ENCODE measurements at regions of chr14 and their contacts with region 1.

Region 1: DNA sequence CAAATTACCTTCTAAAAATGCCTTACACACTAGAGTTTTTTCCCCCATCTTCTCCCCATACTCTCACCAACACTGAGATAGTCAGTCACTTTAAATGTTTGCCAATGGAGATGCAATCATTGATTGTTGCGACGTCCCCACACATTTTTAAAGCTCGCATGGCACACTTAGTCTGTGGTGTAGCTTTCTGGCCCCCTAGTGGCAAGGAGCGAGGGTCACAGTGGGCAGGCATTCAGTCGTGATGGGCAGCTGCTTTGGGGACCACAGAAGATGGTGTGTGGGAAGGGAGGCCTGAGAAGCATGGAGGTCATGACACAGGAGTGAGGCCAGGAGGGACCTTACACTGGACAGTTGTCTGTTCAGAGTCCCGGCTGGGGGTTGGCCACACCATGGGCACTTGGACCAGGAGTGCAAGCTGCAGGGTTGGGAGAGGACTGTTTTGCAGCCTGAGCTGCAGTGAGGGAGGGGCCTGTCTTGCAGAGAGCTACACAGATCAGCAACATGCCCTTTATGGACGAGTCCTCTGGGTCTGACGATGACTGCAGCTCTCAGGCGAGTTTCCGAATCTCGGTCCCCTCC is 28.7 kb downstream of the PIGH start:
- DNase-seq: peak; percentile 67
- ATAC-seq: peak; percentile 92
- H3K4me3 ChIP-seq: no peak overlapping the region
- H3K27ac ChIP-seq: no peak overlapping the region
- H3K4me1 ChIP-seq: peaks cover 9% of the 10 kb centered on the region
- H3K27me3 ChIP-seq: no peaks in the 10 kb centered on the region
- CTCF ChIP-seq: peak; percentile 98

Region 2: DNA sequence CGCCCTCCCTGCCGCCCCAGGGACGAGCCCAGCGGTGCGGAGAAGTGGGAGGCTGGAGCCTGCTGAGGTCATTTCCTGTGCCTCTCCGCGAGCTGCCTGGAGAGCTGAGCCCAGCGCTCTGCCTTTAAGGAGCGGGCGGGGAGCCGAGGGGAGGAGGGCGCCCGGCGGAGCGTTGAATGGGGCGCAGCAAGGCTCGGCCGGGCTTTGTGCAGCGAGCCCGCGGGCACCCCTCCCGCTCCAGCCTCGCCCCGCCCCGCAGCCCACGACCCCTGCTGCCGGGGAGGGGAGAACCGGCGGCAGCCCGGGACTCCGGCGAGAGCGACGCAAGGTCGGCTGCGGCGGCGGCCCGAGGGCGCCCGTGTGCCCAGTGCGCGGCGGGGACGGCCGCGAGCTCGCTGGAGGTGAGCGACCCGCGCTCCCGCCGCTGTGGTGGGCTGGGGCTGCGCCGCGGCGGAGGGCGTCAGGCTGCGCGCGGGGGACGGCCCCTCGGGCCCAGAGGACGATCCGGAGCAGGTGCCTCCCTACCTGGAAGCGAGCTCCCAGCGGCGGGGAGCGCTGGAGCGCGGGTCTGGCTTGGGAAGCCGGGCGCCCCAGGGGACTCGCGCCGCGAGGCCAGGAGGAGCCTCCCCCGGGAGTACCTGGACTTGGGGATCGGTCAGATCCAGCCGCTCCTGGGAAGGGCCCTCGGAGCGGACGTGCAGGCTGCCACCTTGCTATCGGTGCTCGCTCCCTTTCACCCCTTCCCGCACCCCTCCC is 38.2 kb before region 1 on chr14 and contains the start of gene PLEKHH1:
- CTCF ChIA-PET with region 1: interaction called, 126 read pairs
- POLR2A ChIA-PET with region 1: no interaction called
- intact Hi-C with region 1: no loop called
- DNase-seq: peak; percentile 80
- ATAC-seq: peak; percentile 92
- H3K4me3 ChIP-seq: peak within 1 kb of the TSS; percentile 79
- H3K27ac ChIP-seq: no peak within 1 kb of the TSS
- H3K4me1 ChIP-seq: peaks cover 6% of the 10 kb centered on the region; the same call in 1 of the 2 replicates
- H3K27me3 ChIP-seq: no peaks in the 10 kb centered on the region
- CTCF ChIP-seq: no peak
- total RNA-seq, gene PLEKHH1: 6.2 and 11.1 TPM in 2 replicates

Region 3: DNA sequence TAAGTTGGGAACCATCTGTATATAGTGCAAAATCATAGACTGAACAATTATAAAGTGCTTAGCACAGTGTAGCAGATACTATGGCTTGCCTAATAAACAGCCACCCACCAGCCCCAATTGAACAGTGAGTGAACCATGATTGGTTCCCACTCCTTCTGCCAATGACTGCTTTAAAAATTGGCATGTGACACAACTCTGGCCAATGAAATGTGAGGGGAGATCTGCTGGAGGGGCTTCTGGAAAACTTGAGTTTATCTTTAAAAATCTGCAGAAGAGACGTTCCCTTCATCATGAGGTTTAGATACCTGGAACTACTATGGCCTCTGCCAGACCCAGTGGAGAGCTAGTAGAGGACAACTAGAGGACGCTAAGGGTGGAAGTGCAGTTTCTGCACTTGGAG is 24.0 kb after region 1 on chr14:
- CTCF ChIA-PET with region 1: no interaction called
- POLR2A ChIA-PET with region 1: no interaction called
- intact Hi-C with region 1: no loop called
- DNase-seq: no peak
- ATAC-seq: no peak
- H3K4me3 ChIP-seq: no peak overlapping the region
- H3K27ac ChIP-seq: no peak overlapping the region
- H3K4me1 ChIP-seq: peaks cover 12% of the 10 kb centered on the region; the same call in 1 of the 2 replicates
- H3K27me3 ChIP-seq: no peaks in the 10 kb centered on the region
- CTCF ChIP-seq: no peak